Activated T-helper 1 cell treated with anti-CD3 and anti-CD28 coated beads, Interleukin-12 subunit alpha, Interleukin-12 subunit beta, Interleukin-2, Interleukin-4 antibody, amounts not matched to agents 30 ng/mL and 10 ng/mL and 1 ng/mL, durations not matched to agents 14 hours and 24 hours and 36 hours (primary cell): ENCODE measurements at regions of chr11 and their contacts with region 1.

Region 1: DNA sequence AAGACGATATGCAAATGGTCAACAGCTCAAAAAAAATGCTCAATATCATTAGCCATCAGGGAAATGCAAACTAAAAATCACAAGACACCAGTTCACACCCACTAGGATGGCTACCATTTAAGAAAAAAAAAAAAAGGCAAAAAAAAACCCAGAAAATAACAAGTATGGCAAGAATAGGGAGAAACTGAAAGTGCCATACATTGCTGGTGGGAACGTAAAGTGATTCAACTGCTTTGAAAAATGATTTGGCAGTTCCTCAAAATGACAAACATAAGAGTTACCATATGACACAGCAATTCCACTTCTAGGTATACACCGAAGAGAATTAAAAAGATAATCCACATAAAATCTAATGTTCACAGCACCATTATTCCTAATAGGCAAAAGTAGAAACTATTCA is 47.5 kb downstream of the PICALM start:
- DNase-seq: no peak
- H3K4me3 Mint-ChIP-seq: no peak overlapping the region
- H3K27ac Mint-ChIP-seq: peak overlapping the region; percentile 75
- H3K4me1 Mint-ChIP-seq: peaks cover 56% of the 10 kb centered on the region
- H3K27me3 Mint-ChIP-seq: no peaks in the 10 kb centered on the region

Region 2: DNA sequence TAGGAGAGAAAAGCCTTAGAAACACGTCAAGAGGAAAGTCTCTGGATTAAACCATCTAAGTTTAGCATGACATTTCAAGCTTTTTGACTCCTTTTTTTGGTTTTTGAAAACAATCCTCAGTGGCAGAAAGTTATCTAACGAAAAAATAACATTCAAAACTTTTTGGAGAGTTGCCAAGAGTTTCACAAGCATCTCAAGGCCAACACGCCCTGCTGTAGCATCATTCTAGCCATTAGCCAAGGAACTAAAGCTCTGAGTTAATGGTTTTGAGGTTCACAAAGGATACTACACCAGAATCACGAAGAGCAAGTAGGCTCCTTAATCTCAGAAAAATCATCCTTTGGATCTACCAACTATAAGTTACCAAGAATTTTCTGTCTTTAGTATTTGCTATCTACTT is 47.3 kb before region 1 on chr11:
- intact Hi-C with region 1: no loop called
- DNase-seq: no peak
- H3K4me3 Mint-ChIP-seq: no peak overlapping the region
- H3K27ac Mint-ChIP-seq: no peak overlapping the region
- H3K4me1 Mint-ChIP-seq: peaks cover 40% of the 10 kb centered on the region
- H3K27me3 Mint-ChIP-seq: no peaks in the 10 kb centered on the region

Region 3: GRCh38 chr11:86003654-86004053 is 17.7 kb before region 1 on chr11:
- intact Hi-C with region 1: loop called (anchors 2 kb)
- DNase-seq: no peak
- H3K4me3 Mint-ChIP-seq: no peak overlapping the region
- H3K27ac Mint-ChIP-seq: no peak overlapping the region
- H3K4me1 Mint-ChIP-seq: peaks cover 19% of the 10 kb centered on the region
- H3K27me3 Mint-ChIP-seq: no peaks in the 10 kb centered on the region

Region 4: GRCh38 chr11:86034710-86035109 is 13.3 kb after region 1 on chr11:
- intact Hi-C with region 1: loop called (anchors 1 kb)
- DNase-seq: no peak
- H3K4me3 Mint-ChIP-seq: no peak overlapping the region
- H3K27ac Mint-ChIP-seq: no peak overlapping the region
- H3K4me1 Mint-ChIP-seq: peaks cover 36% of the 10 kb centered on the region
- H3K27me3 Mint-ChIP-seq: no peaks in the 10 kb centered on the region